BJ (cell line): ENCODE measurements at regions of chr12 and their contacts with region 1.

Region 1: DNA sequence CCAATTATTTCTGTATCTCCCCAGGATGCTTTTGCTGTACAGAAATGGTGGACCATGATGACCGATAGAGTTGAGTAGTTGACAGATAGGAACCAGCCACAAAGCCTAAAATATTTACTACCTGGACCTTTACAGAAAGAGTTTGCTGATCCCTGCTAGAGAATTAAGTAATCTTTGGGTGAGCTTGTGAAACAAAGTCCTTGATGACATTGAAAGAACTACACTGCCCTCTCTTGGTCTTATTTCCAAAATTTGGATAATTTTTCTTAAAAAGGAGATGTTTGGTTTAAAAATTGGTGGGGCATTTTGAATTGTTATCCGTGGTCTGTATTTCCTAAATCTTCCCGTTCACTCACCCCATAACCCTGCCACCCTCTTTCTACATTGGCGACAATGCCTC is 13.7 kb upstream of the TCTN1 start:
- DNase-seq: no peak
- H3K4me3 ChIP-seq: no peak overlapping the region
- H3K27me3 ChIP-seq: no peaks in the 10 kb centered on the region
- CTCF ChIP-seq: peak; percentile 32; the same call in 1 of the 2 replicates

Region 2: DNA sequence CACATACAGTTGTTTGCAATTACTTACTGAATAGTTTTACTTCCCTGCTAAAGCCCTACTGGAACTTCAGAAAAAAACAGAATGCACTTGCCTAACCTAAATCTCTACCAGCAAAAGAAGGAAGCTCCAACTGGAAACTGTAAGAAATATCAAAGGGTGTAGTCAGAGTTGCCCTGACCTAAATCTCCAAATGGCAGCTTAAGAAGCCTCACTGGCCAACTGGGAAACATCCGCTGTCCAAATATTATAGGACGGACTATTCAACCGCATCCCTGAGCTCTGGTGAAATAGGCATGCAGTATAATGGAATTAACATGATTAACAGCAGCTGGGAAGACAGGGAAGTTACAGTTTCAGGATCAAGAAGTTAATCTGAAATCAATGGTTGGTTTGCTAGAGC is 221.1 kb before region 1 on chr12:
- CTCF ChIA-PET with region 1: no interaction called
- POLR2A ChIA-PET with region 1: no interaction called
- DNase-seq: peak; percentile 27
- H3K4me3 ChIP-seq: no peak overlapping the region
- H3K27me3 ChIP-seq: no peaks in the 10 kb centered on the region
- CTCF ChIP-seq: no peak

Region 3: DNA sequence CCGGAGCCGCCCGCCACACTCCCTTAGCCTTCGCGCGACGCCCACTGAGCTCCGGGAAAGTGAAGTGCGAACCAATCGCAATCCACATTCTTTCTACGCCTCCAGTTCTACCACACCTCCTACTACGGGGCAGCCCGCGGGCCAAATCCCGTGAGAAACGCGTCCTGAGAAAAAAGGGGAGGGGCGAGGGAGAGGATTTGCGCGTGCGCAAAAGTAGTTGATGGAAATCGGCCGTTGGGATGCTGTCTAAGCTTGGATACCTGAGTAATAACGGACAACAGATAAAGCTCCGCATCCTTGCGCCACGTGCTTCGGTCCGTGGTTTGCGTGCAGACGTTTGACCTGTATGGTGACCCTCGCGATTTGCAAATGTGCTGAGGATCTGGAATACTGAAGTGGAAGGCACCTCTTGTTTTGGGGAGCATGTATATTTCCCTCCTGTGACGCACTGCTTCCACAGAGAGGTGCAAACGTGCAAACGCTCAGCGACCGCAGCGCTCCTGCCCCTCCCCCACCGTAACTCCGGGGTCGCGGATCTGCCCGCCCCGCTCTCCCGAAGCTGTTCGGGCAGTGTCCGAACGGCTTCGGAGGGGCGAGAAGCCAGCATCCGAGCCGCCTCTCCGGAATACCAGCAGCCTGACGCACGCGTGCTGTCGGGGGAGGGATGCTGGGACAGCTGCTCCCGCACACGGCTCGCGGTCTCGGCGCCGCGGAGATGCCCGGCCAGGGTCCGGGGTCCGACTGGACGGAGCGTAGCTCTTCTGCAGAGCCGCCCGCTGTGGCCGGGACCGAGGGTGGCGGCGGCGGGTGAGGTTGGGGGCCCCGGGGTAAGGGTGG is 131.8 kb before region 1 on chr12 and contains the starts of genes FAM216A and GPN3:
- CTCF ChIA-PET with region 1: interaction called, 52 read pairs
- POLR2A ChIA-PET with region 1: no interaction called
- DNase-seq: peak; percentile 85
- H3K4me3 ChIP-seq: peak within 1 kb of the TSS; percentile 77
- H3K27me3 ChIP-seq: no peaks in the 10 kb centered on the region
- CTCF ChIP-seq: no peak
- polyA plus RNA-seq, gene FAM216A: 13.0 and 16.6 TPM in 2 replicates
- polyA plus RNA-seq, gene GPN3: 10.6 and 21.8 TPM in 2 replicates

Region 4: GRCh38 chr12:110508071-110508586 is 92.1 kb before region 1 on chr12:
- CTCF ChIA-PET with region 1: interaction called, 340 read pairs
- POLR2A ChIA-PET with region 1: no interaction called
- DNase-seq: no peak
- H3K4me3 ChIP-seq: no peak overlapping the region
- H3K27me3 ChIP-seq: no peaks in the 10 kb centered on the region
- CTCF ChIP-seq: no peak

Region 5: GRCh38 chr12:110537605-110538409 is 62.4 kb before region 1 on chr12:
- CTCF ChIA-PET with region 1: interaction called, 14 read pairs
- POLR2A ChIA-PET with region 1: no interaction called
- DNase-seq: no peak
- H3K4me3 ChIP-seq: no peak overlapping the region
- H3K27me3 ChIP-seq: no peaks in the 10 kb centered on the region
- CTCF ChIP-seq: no peak

Region 6: DNA sequence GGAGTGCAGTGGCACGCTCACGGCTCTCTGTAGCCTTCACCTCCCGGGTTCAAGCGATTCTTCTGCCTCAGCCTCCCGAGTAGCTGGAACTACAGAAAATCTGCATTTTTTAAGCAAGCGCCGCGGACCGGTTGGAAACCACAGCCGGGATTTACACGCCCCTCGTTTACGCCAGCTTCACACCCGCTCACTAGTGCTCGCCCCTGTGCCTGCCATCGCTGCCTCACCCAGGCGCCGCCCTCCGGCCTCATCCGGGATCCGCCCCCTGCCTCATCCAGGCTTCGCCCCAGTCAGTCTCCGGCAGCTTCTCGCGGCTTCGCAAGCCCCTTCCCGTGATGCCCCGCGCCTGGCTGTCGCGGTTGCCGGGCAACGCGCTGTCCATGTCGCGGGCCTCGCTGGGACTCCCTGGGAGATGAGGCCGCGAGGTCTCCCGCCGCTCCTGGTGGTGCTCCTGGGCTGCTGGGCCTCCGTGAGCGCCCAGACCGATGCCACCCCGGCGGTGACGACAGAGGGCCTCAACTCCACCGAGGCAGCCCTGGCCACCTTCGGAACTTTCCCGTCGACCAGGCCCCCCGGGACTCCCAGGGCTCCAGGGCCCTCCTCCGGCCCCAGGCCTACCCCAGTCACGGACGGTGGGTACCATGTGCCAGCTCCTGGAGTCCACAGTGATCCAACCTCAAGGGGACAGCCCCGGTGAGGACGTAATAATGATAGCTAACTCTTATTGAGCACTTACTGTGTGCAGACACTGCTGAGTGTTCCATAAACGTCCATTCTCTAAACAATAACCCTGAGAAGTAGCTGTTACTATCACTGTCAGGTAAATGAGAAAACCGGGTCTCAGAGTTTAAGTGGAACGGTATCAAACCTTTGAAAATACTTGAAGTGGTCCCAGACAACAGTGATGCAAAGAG is 13.8 kb after region 1 on chr12 and contains the start of gene TCTN1:
- CTCF ChIA-PET with region 1: interaction called, 28 read pairs
- POLR2A ChIA-PET with region 1: no interaction called
- DNase-seq: peak; percentile 71
- H3K4me3 ChIP-seq: peak within 1 kb of the TSS; percentile 69
- H3K27me3 ChIP-seq: no peaks in the 10 kb centered on the region
- CTCF ChIP-seq: no peak
- polyA plus RNA-seq, gene TCTN1: 34.0 and 34.1 TPM in 2 replicates

Region 7: DNA sequence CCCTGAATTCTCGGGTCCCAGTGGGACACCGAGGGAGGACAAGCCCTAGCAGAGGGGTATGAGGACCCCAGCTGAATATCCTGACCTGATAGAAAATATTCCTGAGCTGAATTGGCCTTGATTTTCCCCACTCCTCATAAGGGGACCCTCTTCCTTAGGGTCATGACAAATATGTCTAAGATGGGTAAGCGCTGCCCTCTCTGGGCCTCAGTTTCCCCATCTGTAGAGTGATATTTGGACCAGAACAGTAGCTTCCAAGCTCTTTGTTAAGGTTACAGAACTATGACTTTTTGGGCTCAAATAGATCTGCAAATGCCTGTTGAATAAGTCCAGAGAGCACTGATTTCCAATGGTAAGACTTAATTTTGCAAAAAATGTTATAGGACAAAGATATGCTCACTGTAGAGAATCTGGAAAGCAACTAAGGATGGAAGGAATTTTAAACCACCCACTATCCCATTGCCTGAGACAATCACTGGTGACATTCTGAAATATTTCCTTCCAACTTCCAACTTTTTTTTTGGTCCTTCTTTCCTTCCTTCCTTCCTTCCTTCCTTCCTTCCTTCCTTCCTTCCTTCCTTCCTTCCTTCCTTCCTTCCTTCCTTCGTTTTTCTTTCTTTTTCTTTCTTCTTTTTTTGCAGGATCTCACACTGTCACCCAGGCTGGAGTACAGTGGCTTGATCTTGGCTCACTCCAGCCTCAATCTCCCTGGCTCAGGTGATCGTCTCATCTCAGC is 288.2 kb after region 1 on chr12:
- CTCF ChIA-PET with region 1: interaction called, 16 read pairs
- POLR2A ChIA-PET with region 1: no interaction called
- DNase-seq: no peak
- H3K4me3 ChIP-seq: no peak overlapping the region
- H3K27me3 ChIP-seq: no peaks in the 10 kb centered on the region
- CTCF ChIP-seq: no peak

Region 8: GRCh38 chr12:111074559-111074958 is 474.3 kb after region 1 on chr12:
- CTCF ChIA-PET with region 1: no interaction called
- POLR2A ChIA-PET with region 1: no interaction called
- DNase-seq: no peak
- H3K4me3 ChIP-seq: no peak overlapping the region
- H3K27me3 ChIP-seq: no peaks in the 10 kb centered on the region
- CTCF ChIP-seq: no peak